GM12878 (cell line): ENCODE measurements at regions of chr4 and their contacts with region 1.

Region 1: DNA sequence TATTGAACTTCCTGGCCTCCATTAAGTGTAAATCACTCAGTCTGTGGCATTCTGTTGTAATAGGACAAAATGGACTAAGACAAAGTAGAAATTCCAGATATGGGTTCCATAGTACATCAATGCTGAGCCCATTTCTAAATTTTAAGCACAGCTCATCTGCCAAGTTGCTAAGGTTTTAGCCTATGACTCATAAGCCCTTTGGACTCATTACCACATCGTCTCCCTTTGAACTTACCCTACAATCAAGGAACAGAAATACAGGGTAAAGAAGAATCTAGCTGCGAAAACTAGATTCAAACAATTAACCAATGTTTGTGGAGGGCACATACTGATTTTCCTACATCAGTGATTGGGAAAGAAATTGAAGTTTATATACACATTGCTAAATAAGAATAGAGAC is 31.8 kb downstream of the NAA11 start:
- DNase-seq: no peak
- ATAC-seq: peak; percentile 47
- H3K4me3 ChIP-seq: no peak overlapping the region
- H3K27ac ChIP-seq: no peak overlapping the region
- H3K4me1 ChIP-seq: no peaks in the 10 kb centered on the region
- H3K27me3 ChIP-seq: no peaks in the 10 kb centered on the region
- CTCF ChIP-seq: no peak
- EP300 ChIP-seq: no peak
- POLR2A ChIP-seq: no peak
- RAD21 ChIP-seq: no peak

Region 2: DNA sequence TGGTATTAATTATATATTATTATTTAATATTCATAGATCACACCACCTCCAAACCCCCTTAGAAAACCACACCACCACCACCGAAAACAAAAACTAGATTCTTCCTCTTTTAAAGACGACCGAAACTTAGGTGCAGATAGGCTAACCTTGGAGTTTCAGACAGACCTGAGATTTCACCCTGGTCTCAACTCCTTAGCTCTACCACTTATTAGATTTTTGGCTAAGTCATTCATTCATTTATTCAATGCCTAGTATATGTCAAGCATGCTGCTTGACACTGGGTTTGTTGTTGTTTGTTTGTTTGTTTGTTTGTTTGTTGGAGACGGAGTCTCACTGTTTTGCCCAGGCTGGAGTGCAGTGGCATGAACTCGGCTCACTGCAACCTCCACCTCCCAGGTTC is 527.4 kb before region 1 on chr4:
- CTCF ChIA-PET with region 1: no interaction called
- POLR2A ChIA-PET with region 1: no interaction called
- RAD21 ChIA-PET with region 1: no interaction called
- SMC1A ChIA-PET with region 1: no interaction called
- in situ Hi-C with region 1: no loop called
- intact Hi-C with region 1: no loop called
- DNase-seq: no peak
- ATAC-seq: peak; percentile 92
- H3K4me3 ChIP-seq: peak overlapping the region; percentile 14; the same call in 1 of the 2 replicates
- H3K27ac ChIP-seq: no peak overlapping the region
- H3K4me1 ChIP-seq: peaks cover 27% of the 10 kb centered on the region
- H3K27me3 ChIP-seq: no peaks in the 10 kb centered on the region
- CTCF ChIP-seq: no peak
- EP300 ChIP-seq: no peak
- POLR2A ChIP-seq: no peak
- RAD21 ChIP-seq: no peak

Region 3: DNA sequence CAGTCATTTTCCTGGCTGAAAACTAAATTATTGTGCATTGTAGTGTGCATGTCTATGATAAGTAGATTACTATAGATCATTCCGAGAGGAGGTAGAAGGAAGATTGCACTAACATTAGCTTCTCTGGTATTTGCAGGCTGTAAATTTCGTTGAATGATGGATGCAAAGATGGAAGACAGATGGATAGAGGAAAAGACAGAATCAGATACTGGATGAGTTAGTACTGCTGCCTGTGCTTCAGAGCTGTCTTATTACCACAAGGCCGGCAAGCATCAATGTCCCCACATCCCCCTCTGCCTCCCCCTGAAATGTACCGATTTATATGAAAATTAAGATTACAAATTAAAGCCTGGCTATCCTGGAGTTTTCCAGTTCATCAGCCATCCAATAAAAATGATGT is 14.1 kb after region 1 on chr4:
- CTCF ChIA-PET with region 1: interaction called, 6 read pairs
- POLR2A ChIA-PET with region 1: interaction called, 6 read pairs
- RAD21 ChIA-PET with region 1: interaction called, 3 read pairs
- SMC1A ChIA-PET with region 1: interaction called, 37 read pairs
- in situ Hi-C with region 1: no loop called
- intact Hi-C with region 1: no loop called
- DNase-seq: no peak
- ATAC-seq: no peak
- H3K4me3 ChIP-seq: no peak overlapping the region
- H3K27ac ChIP-seq: no peak overlapping the region
- H3K4me1 ChIP-seq: no peaks in the 10 kb centered on the region
- H3K27me3 ChIP-seq: no peaks in the 10 kb centered on the region
- CTCF ChIP-seq: no peak
- EP300 ChIP-seq: no peak
- POLR2A ChIP-seq: no peak
- RAD21 ChIP-seq: no peak

Region 4: DNA sequence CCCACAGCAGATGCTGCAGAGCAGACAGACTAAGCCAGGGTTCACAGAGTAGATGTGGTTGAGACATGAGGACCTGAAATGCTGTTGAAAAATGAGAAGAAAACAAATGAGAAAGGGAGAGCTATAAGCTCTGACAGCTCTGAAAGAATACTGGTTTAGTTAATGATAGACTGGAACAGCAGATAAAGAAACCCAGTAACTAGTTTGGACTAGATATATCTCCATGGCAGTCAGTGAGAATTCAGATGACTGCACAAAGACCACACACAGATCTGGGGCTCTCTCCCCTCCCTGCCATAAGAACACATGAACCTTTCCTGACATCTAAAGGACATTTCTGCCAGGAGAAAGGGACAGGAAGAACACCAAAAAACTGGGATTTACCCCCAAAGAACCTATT is 23.6 kb after region 1 on chr4:
- CTCF ChIA-PET with region 1: interaction called, 3 read pairs
- POLR2A ChIA-PET with region 1: interaction called, 10 read pairs
- RAD21 ChIA-PET with region 1: no interaction called
- SMC1A ChIA-PET with region 1: interaction called, 6 read pairs
- in situ Hi-C with region 1: no loop called
- intact Hi-C with region 1: no loop called
- DNase-seq: no peak
- ATAC-seq: peak; percentile 21; the same call in 2 of the 3 replicates
- H3K4me3 ChIP-seq: no peak overlapping the region
- H3K27ac ChIP-seq: no peak overlapping the region
- H3K4me1 ChIP-seq: no peaks in the 10 kb centered on the region
- H3K27me3 ChIP-seq: no peaks in the 10 kb centered on the region; a peak in 1 of 4 replicates
- CTCF ChIP-seq: no peak
- EP300 ChIP-seq: no peak
- POLR2A ChIP-seq: no peak
- RAD21 ChIP-seq: no peak

Region 5: GRCh38 chr4:80646061-80646460 is 1352.0 kb after region 1 on chr4:
- CTCF ChIA-PET with region 1: no interaction called
- POLR2A ChIA-PET with region 1: no interaction called
- RAD21 ChIA-PET with region 1: no interaction called
- SMC1A ChIA-PET with region 1: no interaction called
- in situ Hi-C with region 1: no loop called
- intact Hi-C with region 1: no loop called
- DNase-seq: no peak
- ATAC-seq: no peak
- H3K4me3 ChIP-seq: no peak overlapping the region
- H3K27ac ChIP-seq: no peak overlapping the region
- H3K4me1 ChIP-seq: no peaks in the 10 kb centered on the region
- H3K27me3 ChIP-seq: no peaks in the 10 kb centered on the region
- CTCF ChIP-seq: no peak
- EP300 ChIP-seq: no peak
- POLR2A ChIP-seq: no peak
- RAD21 ChIP-seq: no peak